Tibial artery (tissue), 4 donors: ENCODE measurements at regions of chr4 and their contacts with region 1.

Region 1: DNA sequence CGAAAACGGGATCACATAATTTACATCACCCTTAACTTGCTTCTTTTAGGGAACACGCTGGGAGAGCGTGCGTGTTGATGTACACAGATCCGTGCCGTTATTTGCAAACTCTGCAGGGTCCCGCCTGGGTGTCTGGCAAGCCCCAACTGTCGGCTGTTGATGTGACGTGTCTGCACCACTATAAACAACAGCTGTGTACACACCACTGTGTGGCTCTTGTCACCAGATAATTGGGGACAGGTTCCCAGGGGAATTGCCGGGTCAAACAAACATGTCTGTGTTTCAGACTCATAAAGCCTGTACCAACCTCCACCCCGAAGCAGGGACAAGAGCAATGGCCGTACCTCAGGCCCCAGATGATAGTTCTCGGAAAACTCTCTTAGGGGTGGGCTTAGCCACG is 105.0 kb upstream of the AFAP1 start:
- DNase-seq: no peak
- H3K4me3 ChIP-seq: no peak overlapping the region
- H3K27ac ChIP-seq: no peak overlapping the region
- H3K4me1 ChIP-seq: no peaks in the 10 kb centered on the region
- H3K27me3 ChIP-seq: no peaks in the 10 kb centered on the region
- CTCF ChIP-seq: no peak

Region 2: GRCh38 chr4:8289956-8290700 is 245.4 kb after region 1 on chr4:
- intact Hi-C with region 1: no loop called
- DNase-seq: peak; percentile 16 to 54
- H3K4me3 ChIP-seq: no peak overlapping the region
- H3K27ac ChIP-seq: no peak overlapping the region
- H3K4me1 ChIP-seq: no peaks in the 10 kb centered on the region
- H3K27me3 ChIP-seq: no peaks in the 10 kb centered on the region
- CTCF ChIP-seq: no peak

Region 3: GRCh38 chr4:8355864-8356565 is 311.3 kb after region 1 on chr4:
- intact Hi-C with region 1: loop called (anchors 5 kb)
- DNase-seq: peak in 1 of 2 donors; percentile 11
- H3K4me3 ChIP-seq: no peak overlapping the region
- H3K27ac ChIP-seq: no peak overlapping the region
- H3K4me1 ChIP-seq: peaks cover 0 to 14% (median 6%) of the 10 kb centered on the region in 4 donors
- H3K27me3 ChIP-seq: no peaks in the 10 kb centered on the region
- CTCF ChIP-seq: no peak